Sciatic nerve (tissue), 2 donors: ENCODE measurements at regions of chr20 and their contacts with region 1.

Region 1: GRCh38 chr20:44310664-44311639 is at the start of gene FITM2:
- DNase-seq: peak; percentile 99
- ATAC-seq: peak; percentile 98
- total RNA-seq, gene FITM2: 7.5 TPM

Region 2: DNA sequence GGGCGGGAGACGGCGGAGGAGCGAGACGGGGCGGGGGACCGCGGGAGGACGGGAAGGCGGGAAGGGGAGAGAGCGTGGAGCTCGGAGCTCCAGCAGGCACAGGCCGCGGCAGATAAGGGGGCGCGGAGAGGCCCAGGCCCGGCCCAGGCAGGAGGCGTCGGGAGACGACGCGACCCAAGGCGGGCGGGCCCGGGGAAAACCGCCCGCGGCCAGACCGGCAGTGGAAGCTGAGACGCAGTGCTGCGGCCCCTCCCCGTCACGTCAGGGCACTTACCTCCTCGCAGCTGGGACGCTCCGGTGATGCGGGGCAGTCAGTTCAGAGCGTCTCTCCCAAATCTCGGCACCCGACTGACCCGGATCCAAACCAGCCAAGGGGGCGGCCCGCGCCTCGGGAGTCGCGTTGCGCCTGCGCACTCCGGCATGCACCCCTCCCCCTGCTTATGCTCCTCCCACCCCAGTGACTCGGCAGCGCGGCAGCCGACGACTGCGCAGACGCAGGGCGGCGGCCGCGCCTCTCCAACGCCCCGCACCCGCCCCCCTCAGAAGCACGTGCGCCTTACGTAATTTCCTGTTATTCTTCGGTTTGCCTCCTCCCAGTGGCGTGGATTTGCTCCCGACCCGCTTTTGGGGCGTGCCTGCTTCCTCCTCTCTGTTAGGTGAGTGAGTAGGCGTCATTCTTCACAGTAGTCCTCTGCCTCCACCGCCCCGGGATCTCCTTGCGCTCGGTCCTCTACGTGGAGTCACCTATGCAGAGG is 100.4 kb before region 1 on chr20 and contains the start of gene OSER1:
- intact Hi-C with region 1: loop called (anchors 10 kb)
- DNase-seq: peak; percentile 98
- ATAC-seq: peak; percentile 98
- total RNA-seq, gene OSER1: 34.1 TPM

Region 3: GRCh38 chr20:44355498-44356352 is 44.8 kb after region 1 on chr20 and contains the start of gene HNF4A:
- intact Hi-C with region 1: no loop called
- DNase-seq: no peak
- ATAC-seq: no peak
- total RNA-seq, gene HNF4A: not detected